ENCODE measurements at regions of chr1 and their contacts with region 1.

Region 1: GRCh38 chr1:19251305-19252196 is at the starts of genes EMC1 and MRTO4:
- DNase-seq: peak; percentile 93
- ATAC-seq: peak; percentile 94
- H3K4me3 ChIP-seq: peak within 1 kb of the TSS; percentile 46 to 82 (median 79)
- H3K4me3 Mint-ChIP-seq: peak within 1 kb of the TSS; percentile 98
- H3K27ac ChIP-seq: peak within 1 kb of the TSS; percentile 90 to 95
- H3K27ac Mint-ChIP-seq: peak within 1 kb of the TSS; percentile 97
- H3K4me1 ChIP-seq: peaks cover 21 to 37% of the 10 kb centered on the region in 2 donors
- H3K4me1 Mint-ChIP-seq: peaks cover 30% of the 10 kb centered on the region
- H3K27me3 ChIP-seq: no peaks in the 10 kb centered on the region
- H3K27me3 Mint-ChIP-seq: no peaks in the 10 kb centered on the region
- CTCF ChIP-seq: no peak
- total RNA-seq, gene EMC1: 43.3 and 45.5 TPM in 2 replicates
- total RNA-seq, gene MRTO4: 20.2 and 28.1 TPM in 2 replicates

Region 2: GRCh38 chr1:19209990-19210771 is 41.4 kb before region 1 on chr1 and contains the start of gene UBR4:
- CTCF ChIA-PET with region 1: no interaction called
- POLR2A ChIA-PET with region 1: interaction called, 9 read pairs
- intact Hi-C with region 1: loop called (anchors 1 kb)
- DNase-seq: peak; percentile 98
- ATAC-seq: peak; percentile 87
- H3K4me3 ChIP-seq: peak within 1 kb of the TSS; percentile 79 to 93 (median 88)
- H3K4me3 Mint-ChIP-seq: peak within 1 kb of the TSS; percentile 93
- H3K27ac ChIP-seq: peak within 1 kb of the TSS; percentile 89 to 94
- H3K27ac Mint-ChIP-seq: peak within 1 kb of the TSS; percentile 94
- H3K4me1 ChIP-seq: peaks cover 32 to 37% of the 10 kb centered on the region in 2 donors
- H3K4me1 Mint-ChIP-seq: peaks cover 58% of the 10 kb centered on the region
- H3K27me3 ChIP-seq: no peaks in the 10 kb centered on the region
- H3K27me3 Mint-ChIP-seq: no peaks in the 10 kb centered on the region
- CTCF ChIP-seq: no peak
- total RNA-seq, gene UBR4: 190 and 205 TPM in 2 replicates